Panc1 (cell line): ENCODE measurements at regions of chr1 and their contacts with region 1.

Region 1: GRCh38 chr1:41341772-41342562 is 19.3 kb upstream of the FOXO6 start:
- DNase-seq: peak; percentile 32
- ATAC-seq: peak; percentile 93
- H3K4me3 ChIP-seq: peak overlapping the region; percentile 6 to 44; a peak in 2 of 4 replicates
- H3K27ac ChIP-seq: peak overlapping the region; percentile 40; the same call in 1 of the 2 replicates
- H3K4me1 ChIP-seq: peaks cover 14% of the 10 kb centered on the region
- H3K27me3 ChIP-seq: no peaks in the 10 kb centered on the region
- CTCF ChIP-seq: no peak

Region 2: GRCh38 chr1:41583658-41584547 is 241.9 kb after region 1 on chr1:
- CTCF ChIA-PET with region 1: no interaction called
- POLR2A ChIA-PET with region 1: interaction called, 18 read pairs
- in situ Hi-C with region 1: no loop called
- intact Hi-C with region 1: no loop called
- DNase-seq: no peak
- ATAC-seq: no peak
- H3K4me3 ChIP-seq: no peak overlapping the region
- H3K27ac ChIP-seq: no peak overlapping the region
- H3K4me1 ChIP-seq: no peaks in the 10 kb centered on the region
- H3K27me3 ChIP-seq: no peaks in the 10 kb centered on the region
- CTCF ChIP-seq: no peak